H1 (cell line): ENCODE measurements at regions of chr5 and their contacts with region 1.

Region 1: DNA sequence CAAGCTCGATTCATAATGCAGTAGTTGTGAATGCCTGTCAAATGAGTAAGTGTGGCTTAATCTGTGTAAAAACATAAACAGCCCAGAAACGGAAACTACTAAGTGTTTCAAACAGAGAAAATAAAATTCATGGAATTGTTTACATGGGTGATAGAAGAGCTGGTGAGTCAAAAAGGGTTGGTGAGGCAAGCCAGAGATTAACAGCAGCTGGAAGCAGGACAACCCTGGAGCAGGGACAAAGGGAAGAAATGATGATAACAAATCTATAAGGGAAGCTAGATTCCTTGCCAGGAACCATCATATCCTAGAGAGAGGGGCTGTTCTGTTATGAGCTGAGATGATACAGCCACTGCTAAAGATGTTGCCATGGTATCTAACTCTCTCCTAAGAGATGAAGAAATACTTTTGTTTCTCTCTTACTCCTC is 18.0 kb upstream of the PRR16 start:
- DNase-seq: no peak
- H3K4me3 ChIP-seq: no peak overlapping the region
- H3K27ac ChIP-seq: no peak overlapping the region
- H3K4me1 ChIP-seq: peaks cover 0 to 3% (median 1%) of the 10 kb centered on the region in 4 experiments; a peak in 1 of 7 replicates
- H3K27me3 ChIP-seq: no peaks in the 10 kb centered on the region
- CTCF ChIP-seq: no peak
- EP300 ChIP-seq: no peak
- POLR2A ChIP-seq: no peak
- RAD21 ChIP-seq: no peak

Region 2: GRCh38 chr5:120457839-120458507 is 11.9 kb after region 1 on chr5:
- CTCF ChIA-PET with region 1: interaction called, 21 read pairs
- POLR2A ChIA-PET with region 1: no interaction called
- DNase-seq: peak; percentile 13 to 82
- H3K4me3 ChIP-seq: no peak overlapping the region
- H3K27ac ChIP-seq: no peak overlapping the region
- H3K4me1 ChIP-seq: no peaks in the 10 kb centered on the region
- H3K27me3 ChIP-seq: peaks cover 1 to 3% (median 2%) of the 10 kb centered on the region in 4 experiments; a peak in 6 of 7 replicates
- CTCF ChIP-seq: peak; percentile 60 to 64 (median 62)
- EP300 ChIP-seq: no peak
- POLR2A ChIP-seq: no peak
- RAD21 ChIP-seq: peak; percentile 79 to 80